ACHN (cell line): ENCODE measurements at regions of chr10 and their contacts with region 1.

Region 1: GRCh38 chr10:115118346-115118745 is 25.2 kb downstream of the ATRNL1 start:
- DNase-seq: peak; percentile 46

Region 2: GRCh38 chr10:114876602-114877300 is 241.6 kb before region 1 on chr10:
- in situ Hi-C with region 1: loop called (anchors 25 kb)
- DNase-seq: peak; percentile 85

Region 3: GRCh38 chr10:114967071-114967470 is 151.3 kb before region 1 on chr10:
- in situ Hi-C with region 1: no loop called
- DNase-seq: no peak